Mammary epithelial cell (primary cell): ENCODE measurements at regions of chr20 and their contacts with region 1.

Region 1: GRCh38 chr20:48523212-48523941 is 304.4 kb downstream of the PREX1 start:
- DNase-seq: peak; percentile 47
- H3K4me3 ChIP-seq: no peak overlapping the region
- H3K27ac ChIP-seq: no peak overlapping the region
- H3K4me1 ChIP-seq: no peaks in the 10 kb centered on the region
- H3K27me3 ChIP-seq: peaks cover 2% of the 10 kb centered on the region
- CTCF ChIP-seq: no peak

Region 2: GRCh38 chr20:47886460-47887041 is 636.8 kb before region 1 on chr20:
- CTCF ChIA-PET with region 1: no interaction called
- dilution Hi-C with region 1: no loop called
- in situ Hi-C with region 1: loop called in 1 of 2 experiments (anchors 5 kb)
- intact Hi-C with region 1: no loop called
- DNase-seq: no peak
- H3K4me3 ChIP-seq: no peak overlapping the region
- H3K27ac ChIP-seq: no peak overlapping the region
- H3K4me1 ChIP-seq: no peaks in the 10 kb centered on the region
- H3K27me3 ChIP-seq: no peaks in the 10 kb centered on the region
- CTCF ChIP-seq: no peak